Right ventricle myocardium inferior (tissue), 1 donor: ENCODE measurements at regions of chr22 and their contacts with region 1.

Region 1: DNA sequence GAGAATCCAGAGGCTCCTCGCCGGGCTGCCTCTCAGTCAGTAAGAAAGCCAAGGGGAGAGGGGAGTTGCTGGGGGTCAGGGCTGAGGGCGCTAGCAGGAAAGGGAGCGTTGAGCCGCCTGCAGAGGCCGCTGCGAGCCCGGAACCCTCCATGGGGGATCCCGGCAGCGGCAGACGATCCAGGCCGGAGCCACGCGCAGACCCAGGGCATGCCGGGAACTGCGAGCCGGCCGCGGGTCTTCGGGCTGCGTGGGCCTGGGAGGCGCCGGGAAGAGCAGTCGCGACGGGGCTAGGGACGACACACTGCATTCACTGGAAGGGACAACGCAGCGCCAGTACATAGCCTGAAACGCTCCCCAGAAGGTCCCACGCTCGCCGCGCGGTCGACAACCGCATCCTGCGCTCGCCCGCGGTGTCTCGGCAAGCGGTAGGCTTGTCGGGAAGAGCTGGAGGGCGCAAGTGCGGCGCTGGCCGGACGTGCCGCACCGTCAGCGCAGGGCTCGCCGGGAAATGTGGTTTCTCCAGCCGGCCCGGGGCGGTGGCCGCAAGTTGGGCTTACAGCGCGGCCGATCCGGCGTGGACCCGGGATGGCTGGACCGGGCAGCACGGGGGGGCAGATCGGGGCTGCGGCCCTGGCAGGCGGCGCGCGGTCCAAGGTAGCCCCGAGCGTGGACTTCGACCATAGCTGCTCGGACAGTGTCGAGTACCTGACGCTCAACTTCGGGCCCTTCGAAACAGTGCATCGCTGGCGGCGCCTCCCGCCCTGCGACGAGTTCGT is at the start of gene LZTR1:
- DNase-seq: peak; percentile 94
- ATAC-seq: peak; percentile 94
- total RNA-seq, gene LZTR1: 24.3 TPM

Region 2: DNA sequence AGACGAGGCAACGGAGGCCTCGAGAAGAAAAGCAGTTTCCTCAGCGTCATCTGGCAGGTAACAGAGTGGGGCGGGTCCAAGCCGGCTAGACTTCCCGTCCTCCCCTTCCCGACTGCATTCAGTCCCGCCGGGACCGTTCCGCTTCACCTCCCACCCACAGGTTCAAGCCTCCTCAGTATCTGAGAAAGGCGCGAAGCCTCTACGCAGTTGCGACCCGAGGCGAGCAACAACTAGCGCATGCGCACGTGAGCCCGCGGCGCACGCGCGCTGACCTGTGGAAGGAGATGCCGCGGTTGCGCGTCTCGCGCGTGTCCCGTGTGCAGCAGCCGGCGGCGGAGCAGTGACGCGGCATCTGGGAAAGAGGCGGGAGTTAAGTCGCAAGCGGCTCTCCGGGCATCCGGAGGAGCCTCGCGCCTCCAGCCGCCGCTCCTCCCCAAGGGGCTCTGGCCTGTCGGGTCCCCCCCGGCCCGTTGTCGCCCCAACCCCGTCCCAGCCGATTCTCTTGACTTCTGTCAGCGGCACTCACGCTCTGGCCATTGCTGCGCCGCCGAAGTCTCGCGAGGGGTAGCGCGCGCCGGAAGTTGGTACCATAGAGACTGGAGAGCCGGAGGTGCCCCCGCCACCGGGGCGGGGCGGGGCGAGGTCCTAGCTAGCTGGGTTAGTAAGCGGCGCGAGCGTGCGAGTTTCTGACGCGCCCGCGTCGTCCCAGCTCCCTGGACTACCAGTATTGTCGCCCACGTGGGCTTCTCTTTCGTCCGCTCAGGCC is 19.8 kb after region 1 on chr22 and contains the start of gene THAP7:
- intact Hi-C with region 1: loop called (anchors 1 kb)
- DNase-seq: peak; percentile 98
- ATAC-seq: peak; percentile 97
- total RNA-seq, gene THAP7: 17.0 TPM